PC-9 (cell line): ENCODE measurements at regions of chr11 and their contacts with region 1.

Region 1: DNA sequence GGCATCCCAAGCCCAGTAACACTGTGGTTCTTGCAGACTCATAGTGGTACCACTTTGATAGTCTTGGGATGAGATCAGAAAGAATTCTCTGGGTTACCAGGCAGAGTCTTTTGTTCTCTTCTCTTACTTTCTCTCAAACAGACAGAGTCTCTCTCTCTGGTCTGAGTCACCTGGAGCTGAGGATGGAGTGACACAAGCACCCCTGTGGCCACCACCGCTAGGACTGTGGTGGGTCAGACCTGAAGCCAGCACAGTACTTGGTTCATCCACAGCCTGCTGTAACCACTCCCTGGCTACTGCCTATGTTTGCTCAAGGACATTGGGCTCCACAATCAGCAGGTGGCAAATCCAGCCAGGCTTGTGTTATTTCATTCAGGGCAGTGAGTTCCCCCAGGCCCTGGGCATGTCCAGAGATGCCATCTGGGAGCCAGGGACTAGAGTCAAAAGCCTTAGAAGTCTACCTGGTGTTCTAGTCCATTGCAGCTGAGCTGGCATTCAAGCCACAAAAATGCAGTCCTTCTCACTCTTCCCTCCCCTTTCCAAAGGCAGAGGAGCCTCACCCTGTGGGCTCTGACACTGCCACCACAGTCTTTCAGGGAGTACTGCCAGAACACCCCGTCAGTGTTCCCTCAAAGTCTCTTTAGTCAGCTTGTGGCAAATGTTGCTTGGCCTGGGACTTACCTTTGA is 29.9 kb downstream of the ENDOD1 start:
- DNase-seq: peak; percentile 73 to 87
- H3K4me3 ChIP-seq: no peak overlapping the region
- H3K27ac ChIP-seq: no peak overlapping the region
- H3K4me1 ChIP-seq: peaks cover 12% of the 10 kb centered on the region
- H3K27me3 ChIP-seq: no peaks in the 10 kb centered on the region
- CTCF ChIP-seq: no peak

Region 2: DNA sequence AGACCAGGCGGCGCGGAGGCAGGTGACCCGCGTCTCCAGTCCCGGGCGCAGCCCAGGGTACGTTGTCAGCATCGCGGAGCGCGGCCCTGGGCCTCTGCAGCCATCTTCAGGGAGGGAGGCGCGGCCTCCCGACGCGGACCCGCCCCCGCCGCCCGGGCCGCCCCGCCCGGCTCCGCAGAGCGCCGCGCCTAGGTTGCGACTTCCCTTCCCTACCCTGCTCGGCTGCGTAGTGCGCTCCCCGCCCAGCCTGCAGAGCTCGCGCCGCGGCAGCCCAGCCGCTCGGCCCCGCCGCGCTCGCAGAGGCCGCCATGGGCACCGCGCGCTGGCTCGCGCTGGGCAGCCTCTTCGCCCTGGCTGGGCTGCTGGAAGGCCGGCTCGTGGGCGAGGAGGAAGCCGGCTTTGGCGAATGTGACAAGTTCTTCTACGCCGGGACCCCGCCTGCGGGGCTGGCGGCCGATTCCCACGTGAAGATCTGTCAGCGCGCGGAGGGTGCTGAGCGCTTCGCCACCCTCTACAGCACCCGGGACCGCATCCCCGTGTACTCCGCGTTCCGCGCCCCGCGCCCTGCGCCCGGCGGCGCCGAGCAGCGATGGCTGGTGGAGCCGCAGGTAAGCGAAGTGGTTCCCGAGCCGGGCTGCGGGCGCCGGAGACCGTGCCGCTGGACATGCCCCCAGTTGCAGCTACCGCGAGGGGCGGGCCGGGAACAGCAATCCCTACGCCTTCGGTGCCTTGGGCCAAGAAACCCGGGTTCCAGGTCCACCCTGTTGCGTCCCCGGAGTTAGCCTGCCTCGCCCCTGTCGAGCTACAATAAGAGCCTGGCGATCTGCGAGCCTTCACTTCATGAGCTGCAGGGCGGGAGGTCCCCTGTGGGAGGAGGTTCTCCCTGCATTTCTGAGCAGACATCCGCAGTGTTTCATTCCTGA is 29.6 kb before region 1 on chr11 and contains the start of gene ENDOD1:
- CTCF ChIA-PET with region 1: interaction called, 3 read pairs
- POLR2A ChIA-PET with region 1: no interaction called
- intact Hi-C with region 1: loop called (anchors 1 kb)
- DNase-seq: peak; percentile 68 to 81
- H3K4me3 ChIP-seq: peak within 1 kb of the TSS; percentile 93
- H3K27ac ChIP-seq: peak within 1 kb of the TSS; percentile 24; the same call in 1 of the 2 replicates
- H3K4me1 ChIP-seq: peaks cover 41% of the 10 kb centered on the region
- H3K27me3 ChIP-seq: no peaks in the 10 kb centered on the region
- CTCF ChIP-seq: peak; percentile 27; the same call in 1 of the 2 replicates
- total RNA-seq, gene ENDOD1: 8.0 and 8.1 TPM in 2 replicates

Region 3: GRCh38 chr11:95134491-95134890 is 15.0 kb after region 1 on chr11:
- CTCF ChIA-PET with region 1: interaction called, 3 read pairs
- POLR2A ChIA-PET with region 1: no interaction called
- intact Hi-C with region 1: loop called (anchors 1 kb)
- DNase-seq: peak; percentile 73 to 94
- H3K4me3 ChIP-seq: no peak overlapping the region
- H3K27ac ChIP-seq: peak overlapping the region; percentile 43
- H3K4me1 ChIP-seq: peaks cover 25% of the 10 kb centered on the region
- H3K27me3 ChIP-seq: no peaks in the 10 kb centered on the region
- CTCF ChIP-seq: no peak

Region 4: DNA sequence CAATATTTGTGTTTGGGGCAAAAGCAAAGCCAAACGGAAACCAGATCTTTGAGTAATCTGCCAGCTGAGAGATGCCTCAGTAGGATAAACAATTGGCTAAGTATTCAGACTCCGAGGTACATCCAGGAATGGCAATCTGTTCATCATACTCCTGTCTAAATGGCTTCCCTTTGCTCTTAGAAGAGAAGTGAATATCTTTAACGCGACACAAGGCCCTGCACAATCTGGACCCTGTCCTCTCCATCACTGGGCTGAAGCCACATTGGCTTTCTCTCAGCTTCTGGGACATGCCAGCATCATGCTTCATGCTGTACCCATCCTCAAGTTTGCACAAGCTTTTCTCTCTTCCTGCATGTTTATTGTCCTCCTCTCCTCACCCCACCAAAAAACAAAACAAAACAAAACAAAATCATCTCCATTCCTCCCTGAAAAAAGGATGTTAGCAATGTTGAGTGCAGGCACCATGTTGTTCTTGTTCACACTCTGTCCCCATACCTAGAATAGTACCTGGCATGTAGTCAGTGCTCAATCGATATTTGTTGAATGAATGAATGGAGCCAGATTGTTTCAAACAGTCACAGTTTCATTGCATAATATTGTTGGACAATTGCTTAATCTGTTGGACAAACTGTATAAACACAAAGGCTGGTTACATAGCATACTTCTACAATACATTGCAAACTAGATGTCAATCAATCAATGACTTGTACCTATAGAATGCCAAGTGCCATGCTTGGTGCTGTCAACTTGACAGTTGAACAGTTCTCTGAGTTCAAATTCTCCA is 149.7 kb after region 1 on chr11:
- CTCF ChIA-PET with region 1: no interaction called
- POLR2A ChIA-PET with region 1: no interaction called
- intact Hi-C with region 1: no loop called
- DNase-seq: peak in 1 of 2 experiments; percentile 3
- H3K4me3 ChIP-seq: no peak overlapping the region
- H3K27ac ChIP-seq: no peak overlapping the region
- H3K4me1 ChIP-seq: no peaks in the 10 kb centered on the region
- H3K27me3 ChIP-seq: no peaks in the 10 kb centered on the region
- CTCF ChIP-seq: no peak